ENCODE measurements at regions of chr18 and their contacts with region 1.

Region 1: DNA sequence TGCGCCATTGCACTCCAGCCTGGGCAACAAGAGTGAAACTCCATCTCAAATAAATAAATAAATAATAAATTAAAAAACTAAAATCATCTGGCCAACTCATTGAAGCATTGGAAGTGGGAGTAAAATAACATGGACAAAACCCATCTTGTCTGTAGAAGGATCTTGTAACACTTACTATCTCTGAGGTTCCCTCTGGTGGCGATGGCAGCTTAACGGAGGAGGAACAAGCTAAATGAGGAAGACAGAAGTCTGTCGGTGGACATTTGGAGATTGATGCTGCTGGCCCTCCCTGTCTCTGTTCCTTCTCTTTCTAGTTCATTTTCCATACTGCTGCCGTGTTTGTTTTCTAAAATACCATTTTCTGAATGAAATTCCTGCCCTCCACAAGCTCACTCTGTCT is 43.4 kb downstream of the ZCCHC2 start:
- DNase-seq: peak in 3 of 9 experiments; percentile 23 to 43 (median 34)
- ATAC-seq: no peak
- H3K4me3 ChIP-seq: no peak overlapping the region
- H3K4me3 Mint-ChIP-seq: no peak overlapping the region
- H3K27ac ChIP-seq: no peak overlapping the region
- H3K27ac Mint-ChIP-seq: no peak overlapping the region
- H3K4me1 ChIP-seq: no peaks in the 10 kb centered on the region
- H3K4me1 Mint-ChIP-seq: no peaks in the 10 kb centered on the region
- H3K27me3 ChIP-seq: no peaks in the 10 kb centered on the region
- H3K27me3 Mint-ChIP-seq: no peaks in the 10 kb centered on the region
- CTCF ChIP-seq: peak; percentile 31

Region 2: GRCh38 chr18:62312851-62313250 is 253.3 kb before region 1 on chr18:
- CTCF ChIA-PET with region 1: no interaction called
- POLR2A ChIA-PET with region 1: no interaction called
- intact Hi-C with region 1: loop called in 1 of 2 experiments (anchors 1 kb)
- DNase-seq: no peak
- ATAC-seq: no peak
- H3K4me3 ChIP-seq: no peak overlapping the region
- H3K4me3 Mint-ChIP-seq: no peak overlapping the region
- H3K27ac ChIP-seq: no peak overlapping the region
- H3K27ac Mint-ChIP-seq: no peak overlapping the region
- H3K4me1 ChIP-seq: no peaks in the 10 kb centered on the region
- H3K4me1 Mint-ChIP-seq: no peaks in the 10 kb centered on the region
- H3K27me3 ChIP-seq: no peaks in the 10 kb centered on the region
- H3K27me3 Mint-ChIP-seq: peaks cover 2% of the 10 kb centered on the region
- CTCF ChIP-seq: no peak

Measured in CD8-positive, alpha-beta T cell (primary cell).